ENCODE measurements at regions of chr2 and their contacts with region 1.

Region 1: GRCh38 chr2:234496835-234497591 is at the start of gene ARL4C:
- DNase-seq: no peak
- H3K4me3 ChIP-seq: peak within 1 kb of the TSS; percentile 72 to 76
- H3K27ac ChIP-seq: peak within 1 kb of the TSS; percentile 91
- H3K4me1 ChIP-seq: peaks cover 34% of the 10 kb centered on the region
- H3K27me3 ChIP-seq: no peaks in the 10 kb centered on the region
- CTCF ChIP-seq: no peak
- POLR2A ChIP-seq: peak; percentile 33 to 60
- total RNA-seq, gene ARL4C: 17.4 TPM

Region 2: GRCh38 chr2:234288974-234289455 is 208.0 kb before region 1 on chr2:
- intact Hi-C with region 1: loop called (anchors 10 kb)
- DNase-seq: peak in 1 of 2 donors; percentile 94
- H3K4me3 ChIP-seq: no peak overlapping the region
- H3K27ac ChIP-seq: peak overlapping the region; percentile 54
- H3K4me1 ChIP-seq: peaks cover 15% of the 10 kb centered on the region
- H3K27me3 ChIP-seq: no peaks in the 10 kb centered on the region
- CTCF ChIP-seq: peak; percentile 18 to 67 (median 44)
- POLR2A ChIP-seq: no peak

Region 3: DNA sequence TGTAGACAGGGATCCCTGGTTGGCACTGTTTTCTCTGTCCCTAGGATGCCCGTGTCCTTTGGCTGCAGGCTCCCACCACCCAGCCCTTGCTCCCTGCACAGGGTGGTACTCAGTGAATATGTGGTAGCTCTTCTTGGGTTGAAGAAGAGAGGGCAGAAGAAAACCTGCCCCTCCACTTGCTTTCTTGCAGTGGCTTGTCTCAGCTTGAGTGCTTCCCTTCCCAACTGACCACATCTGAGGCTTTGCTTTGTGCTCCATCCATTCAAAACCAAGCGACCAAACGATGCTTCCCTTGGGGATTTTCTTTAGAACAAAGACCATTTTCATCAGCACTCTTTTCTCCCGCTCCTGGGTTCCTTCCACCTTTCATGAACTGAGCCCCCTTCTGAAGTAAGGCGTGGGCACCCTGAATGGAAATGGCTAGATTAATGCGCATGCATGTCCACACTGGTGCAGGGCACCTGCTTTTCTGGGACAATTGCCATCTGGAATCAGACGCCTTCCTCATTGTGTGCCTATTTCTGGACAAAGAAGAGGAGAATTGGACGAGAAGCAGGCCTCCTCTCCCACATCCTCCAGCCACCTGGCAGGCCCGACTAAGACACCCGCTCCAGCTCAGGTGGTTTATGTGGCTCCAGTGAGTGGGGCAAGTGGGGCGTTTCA is 59.2 kb before region 1 on chr2:
- intact Hi-C with region 1: no loop called
- DNase-seq: no peak
- H3K4me3 ChIP-seq: no peak overlapping the region
- H3K27ac ChIP-seq: no peak overlapping the region
- H3K4me1 ChIP-seq: no peaks in the 10 kb centered on the region
- H3K27me3 ChIP-seq: no peaks in the 10 kb centered on the region
- CTCF ChIP-seq: no peak
- POLR2A ChIP-seq: no peak

Measured in vagina (tissue), 2 donors.